ENCODE measurements at regions of chr21 and their contacts with region 1.

Region 1: DNA sequence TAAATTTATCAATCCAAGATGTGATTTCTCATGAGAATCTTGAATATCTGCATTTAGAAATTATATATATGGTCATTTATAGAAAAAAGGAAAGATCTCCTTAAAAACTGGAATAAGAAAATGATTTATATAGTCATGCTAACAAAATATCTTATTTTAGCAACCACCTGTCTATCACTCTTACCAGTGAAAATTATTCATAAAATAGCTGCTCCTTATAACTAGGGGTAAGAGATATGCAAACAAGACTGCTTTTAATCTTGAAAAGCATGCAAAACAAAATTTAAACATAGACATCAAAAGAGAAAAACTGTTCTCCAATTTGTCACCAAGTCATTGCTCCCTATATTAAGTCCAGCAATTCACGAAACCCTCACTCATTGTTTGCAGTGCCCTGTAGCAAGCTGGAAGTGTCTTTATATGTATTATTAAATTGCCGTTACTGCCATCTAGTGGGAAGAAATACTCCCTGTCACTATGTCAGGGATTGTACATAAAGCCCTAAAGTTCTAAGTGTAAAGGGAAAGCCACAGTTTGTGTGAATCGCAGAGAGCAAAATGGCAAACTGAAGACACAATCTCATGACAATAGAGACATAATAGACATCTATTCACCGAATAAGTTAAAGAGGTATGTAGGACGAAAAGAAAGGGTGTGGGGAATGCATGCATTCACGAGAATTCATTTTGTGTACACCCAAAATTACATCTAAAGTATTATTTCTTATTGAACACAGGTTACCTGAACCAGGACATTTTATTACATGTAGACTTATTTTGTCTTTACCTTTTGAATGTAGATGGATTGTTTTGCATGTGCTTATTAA is 600.5 kb downstream of the USP25 start:
- DNase-seq: no peak
- ATAC-seq: peak; percentile 67

Region 2: DNA sequence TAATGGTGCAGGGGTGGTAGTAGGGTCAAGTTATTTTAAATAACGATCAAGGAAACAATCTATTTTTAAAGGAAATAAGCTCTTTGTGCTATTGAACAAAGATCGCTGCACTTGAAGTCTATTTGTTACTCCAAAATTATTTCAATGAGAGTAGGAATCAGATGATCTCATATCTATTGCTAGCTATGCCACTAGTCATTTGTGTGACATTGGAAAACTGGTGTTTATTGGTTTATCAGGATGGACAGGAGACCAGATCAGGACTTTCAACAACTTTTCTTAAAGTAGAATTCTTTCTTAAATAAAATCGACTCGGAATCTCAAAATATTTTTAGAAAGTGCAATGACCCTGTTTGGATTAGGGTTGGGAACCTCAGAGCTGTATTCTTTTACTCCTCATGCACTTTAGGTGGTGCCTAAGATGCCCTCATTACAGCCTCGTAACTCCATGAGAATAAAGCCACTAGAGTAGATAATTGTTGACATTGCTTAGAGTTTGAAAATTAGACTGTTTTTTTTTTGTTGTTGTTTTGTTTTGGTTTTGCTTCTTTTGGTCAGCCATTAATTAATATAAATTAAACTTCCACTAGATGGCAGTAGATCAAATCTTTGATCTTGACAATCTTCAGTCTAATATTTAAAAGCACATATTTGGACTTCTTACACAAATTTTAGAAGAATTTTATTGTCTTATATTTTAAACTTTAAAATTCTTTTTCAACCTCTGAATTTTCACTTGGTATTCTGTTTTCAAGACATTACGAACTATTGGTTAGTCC is 248.1 kb before region 1 on chr21:
- intact Hi-C with region 1: loop called in 1 of 2 experiments (anchors 5 kb)
- DNase-seq: no peak
- ATAC-seq: no peak

Measured in left colon (tissue), 2 donors.